Posterior vena cava (tissue), 2 donors: ENCODE measurements at regions of chr6 and their contacts with region 1.

Region 1: GRCh38 chr6:1624851-1625781 is 15.4 kb downstream of the FOXC1 start:
- DNase-seq: peak; percentile 85

Region 2: DNA sequence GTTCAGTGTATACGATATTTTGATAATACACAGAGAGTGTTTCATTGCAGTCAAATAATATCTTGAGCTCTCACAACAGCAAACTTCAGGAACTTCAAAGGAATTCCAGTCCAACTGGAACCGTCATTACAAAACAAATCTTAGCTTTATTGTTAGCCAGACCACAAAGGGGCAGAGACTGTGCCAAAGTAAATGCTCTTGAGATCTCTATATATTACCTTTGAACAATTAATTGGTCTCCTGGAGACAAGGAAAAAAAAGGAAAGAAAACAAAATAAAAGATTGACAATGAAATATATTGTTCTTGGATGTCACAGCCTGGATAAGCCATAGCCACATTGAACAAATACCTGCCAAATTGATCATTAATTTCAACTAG is 54.6 kb after region 1 on chr6:
- intact Hi-C with region 1: loop called in 1 of 2 experiments (anchors 5 kb)
- DNase-seq: no peak

Region 3: GRCh38 chr6:1701668-1702353 is 76.7 kb after region 1 on chr6:
- intact Hi-C with region 1: loop called in 1 of 2 experiments (anchors 5 kb)
- DNase-seq: peak; percentile 82

Region 4: DNA sequence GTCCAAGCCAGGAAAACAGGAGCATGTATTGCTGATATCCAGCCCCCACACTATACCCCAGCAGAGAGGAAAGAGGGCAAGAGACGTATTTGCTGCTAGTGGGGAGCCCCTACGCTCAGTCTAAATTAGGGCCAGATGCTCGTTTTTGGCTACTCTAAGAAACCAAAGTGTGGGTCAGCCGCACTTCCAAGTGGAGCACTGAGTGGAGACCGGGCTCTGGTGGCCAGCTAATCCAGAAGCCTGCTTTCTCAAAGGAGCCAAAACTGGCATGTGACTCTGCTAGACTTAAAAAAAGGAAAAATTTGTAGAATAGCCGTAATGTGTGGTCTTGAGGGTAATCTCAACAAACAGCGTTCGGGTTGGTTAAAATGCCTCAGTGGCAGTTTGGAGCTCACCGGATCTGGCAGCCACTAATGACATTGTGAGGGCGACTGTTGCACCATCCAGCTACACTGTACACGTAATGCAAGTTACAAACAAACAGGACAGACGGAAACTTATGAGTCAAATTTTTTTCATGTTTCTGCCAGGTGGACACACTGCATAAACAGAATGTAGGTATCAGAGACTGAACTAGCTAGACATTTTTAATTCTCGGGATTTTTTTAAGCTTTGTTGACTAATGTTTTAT is 215.5 kb after region 1 on chr6:
- intact Hi-C with region 1: loop called in 1 of 2 experiments (anchors 10 kb)
- DNase-seq: no peak